ENCODE measurements at regions of chr6 and their contacts with region 1.

Region 1: DNA sequence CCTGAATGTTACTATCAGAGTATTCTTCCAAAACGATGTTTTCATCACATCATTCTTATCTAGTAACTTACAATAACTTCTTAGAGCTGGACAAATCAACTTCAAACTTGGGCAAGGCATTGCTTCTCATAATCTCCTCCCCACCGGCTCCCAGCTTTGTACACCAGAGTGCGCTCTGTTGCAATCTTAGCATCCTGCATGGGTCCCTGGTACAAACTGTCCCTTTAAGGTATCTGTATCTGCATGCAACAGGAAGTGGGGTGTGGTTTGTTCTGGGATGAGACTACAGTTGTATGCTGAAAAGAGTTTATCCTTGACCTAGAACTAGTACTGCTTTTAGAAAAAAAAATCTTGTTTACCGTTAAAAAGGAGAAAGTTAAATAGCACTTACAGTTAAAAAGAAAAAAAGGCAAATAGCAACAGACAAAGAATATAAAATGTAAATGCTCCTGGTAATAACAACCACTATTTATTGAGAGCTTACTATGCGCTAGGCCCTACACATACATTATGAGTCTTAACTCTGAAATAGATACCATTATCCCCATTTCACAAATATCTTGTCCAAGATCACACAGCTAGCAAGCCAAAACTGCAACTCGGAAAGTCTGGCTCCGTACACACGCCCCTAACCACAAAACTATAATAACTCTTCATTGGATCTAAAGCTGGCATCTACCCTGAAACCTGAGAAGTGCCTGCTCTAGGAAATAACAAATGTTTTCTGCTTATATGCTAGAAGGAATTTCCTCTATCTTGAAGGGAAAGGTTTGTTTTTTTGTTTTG is 9.8 kb upstream of the HECA start:
- DNase-seq: peak; percentile 94
- H3K4me3 Mint-ChIP-seq: peak overlapping the region; percentile 73
- H3K27ac Mint-ChIP-seq: peak overlapping the region; percentile 98
- H3K4me1 Mint-ChIP-seq: peaks cover 41% of the 10 kb centered on the region
- H3K27me3 Mint-ChIP-seq: no peaks in the 10 kb centered on the region

Region 2: DNA sequence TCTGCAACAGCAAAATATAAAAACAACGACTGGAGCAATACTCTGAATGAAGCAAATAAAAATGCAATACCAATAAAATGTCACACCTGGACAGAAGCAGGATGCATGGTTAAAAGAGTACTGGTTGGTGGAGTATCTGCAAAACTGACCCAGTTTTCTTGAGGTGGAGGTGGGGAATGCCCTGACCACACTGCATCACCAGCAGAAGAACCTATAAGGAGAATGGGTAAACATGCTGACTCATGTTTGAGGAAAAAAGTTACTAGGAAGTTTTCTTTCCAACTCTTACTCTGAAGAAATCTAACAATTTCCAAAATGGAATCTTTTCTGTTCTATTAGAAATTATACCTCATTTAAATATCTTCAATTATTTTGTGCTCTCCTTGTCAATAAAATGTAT is 180.7 kb before region 1 on chr6:
- intact Hi-C with region 1: no loop called
- DNase-seq: peak; percentile 69
- H3K4me3 Mint-ChIP-seq: no peak overlapping the region
- H3K27ac Mint-ChIP-seq: peak overlapping the region; percentile 45
- H3K4me1 Mint-ChIP-seq: peaks cover 40% of the 10 kb centered on the region
- H3K27me3 Mint-ChIP-seq: peaks cover 2% of the 10 kb centered on the region

Region 3: DNA sequence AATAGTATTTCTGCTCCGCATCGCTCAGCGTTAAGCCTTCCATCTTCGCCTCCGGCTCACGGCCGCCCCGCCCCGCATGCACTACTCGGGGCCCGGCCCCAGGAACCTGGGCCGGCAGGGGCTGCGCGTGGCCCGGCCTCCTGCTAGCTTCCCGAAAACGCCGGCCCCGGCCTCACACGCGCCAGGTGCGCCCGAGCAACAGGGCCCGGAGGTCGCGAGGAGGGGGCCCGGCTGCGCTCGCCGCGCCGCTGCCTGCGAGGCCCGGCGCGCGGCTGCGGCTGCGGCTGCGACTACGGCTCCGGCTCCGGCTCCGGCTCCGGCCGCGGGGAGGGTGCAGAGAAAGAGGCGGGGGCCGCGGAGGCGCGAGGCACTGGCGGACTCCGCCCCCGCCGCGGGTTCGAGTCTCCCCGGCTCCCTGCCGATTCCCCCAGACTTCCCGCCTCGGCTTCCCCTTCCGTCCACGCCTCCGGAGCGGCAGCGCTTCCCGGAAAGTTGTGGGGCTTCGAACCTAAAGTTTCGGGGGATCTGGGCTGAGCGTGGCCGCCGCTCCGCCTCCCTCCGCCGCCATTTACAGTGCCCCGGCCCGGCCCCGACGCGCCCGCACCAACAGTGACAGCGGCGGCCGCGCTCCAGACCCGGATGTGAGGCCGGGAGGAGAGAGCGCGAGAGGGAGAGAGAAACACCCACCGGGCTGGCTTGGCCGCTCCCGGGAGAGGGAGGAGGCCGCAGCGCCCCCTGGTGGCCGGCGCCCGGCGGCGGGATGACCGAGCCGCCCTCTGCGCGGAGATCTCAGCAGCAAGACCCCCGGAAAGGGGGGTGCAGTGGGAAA is 137.2 kb before region 1 on chr6 and contains the start of gene REPS1:
- intact Hi-C with region 1: loop called (anchors 5 kb)
- DNase-seq: peak; percentile 98
- H3K4me3 Mint-ChIP-seq: peak within 1 kb of the TSS; percentile 91
- H3K27ac Mint-ChIP-seq: peak within 1 kb of the TSS; percentile 97
- H3K4me1 Mint-ChIP-seq: peaks cover 19% of the 10 kb centered on the region
- H3K27me3 Mint-ChIP-seq: peaks cover under 1% of the 10 kb centered on the region
- total RNA-seq, gene REPS1: 65.8 and 70.1 TPM in 2 replicates

Region 4: DNA sequence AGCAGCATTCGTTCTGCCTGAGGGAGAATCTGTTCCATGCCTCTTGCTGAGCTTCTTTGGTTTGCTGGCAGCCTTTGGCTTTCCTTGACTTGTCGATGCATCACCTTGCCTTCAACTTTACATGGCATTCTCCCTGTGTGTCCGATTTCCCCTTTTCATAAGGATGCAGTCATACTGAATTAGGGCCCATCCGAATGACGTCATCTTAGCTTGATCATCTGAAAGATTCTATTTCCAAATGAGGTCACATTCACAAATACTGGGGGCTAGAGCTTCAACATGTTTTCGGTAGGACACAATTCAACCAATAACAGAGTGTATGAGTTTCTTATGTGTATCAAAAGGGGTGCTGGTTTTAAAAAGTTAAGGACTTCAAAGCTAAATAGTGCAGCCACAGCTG is 18.0 kb before region 1 on chr6:
- intact Hi-C with region 1: no loop called
- DNase-seq: no peak
- H3K4me3 Mint-ChIP-seq: no peak overlapping the region
- H3K27ac Mint-ChIP-seq: no peak overlapping the region
- H3K4me1 Mint-ChIP-seq: peaks cover 5% of the 10 kb centered on the region
- H3K27me3 Mint-ChIP-seq: no peaks in the 10 kb centered on the region

Region 5: DNA sequence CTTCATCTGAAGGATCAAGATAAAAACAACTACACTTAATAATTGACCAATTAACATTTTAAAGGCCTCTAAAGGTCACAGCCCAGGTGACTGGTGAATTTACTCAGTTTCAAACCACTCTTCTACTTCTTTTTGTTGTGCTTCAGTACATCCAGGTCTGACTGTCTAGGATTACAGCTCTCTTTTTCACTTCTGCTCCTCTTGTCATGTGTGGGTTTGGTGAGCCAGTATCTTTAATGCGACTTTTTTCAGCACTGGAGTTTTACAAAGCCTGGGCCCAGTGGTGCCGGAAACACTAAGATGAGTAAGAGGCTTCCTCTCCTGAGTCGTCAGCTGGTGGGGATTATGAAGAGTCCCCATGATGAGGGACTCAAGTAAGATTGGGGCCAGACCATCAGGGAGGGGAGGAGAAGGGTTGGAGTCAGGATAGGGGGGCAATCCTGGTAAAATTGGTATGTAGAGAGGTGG is 36.8 kb after region 1 on chr6:
- intact Hi-C with region 1: loop called (anchors 1 kb)
- DNase-seq: peak; percentile 91
- H3K4me3 Mint-ChIP-seq: peak overlapping the region; percentile 80
- H3K27ac Mint-ChIP-seq: peak overlapping the region; percentile 98
- H3K4me1 Mint-ChIP-seq: peaks cover 66% of the 10 kb centered on the region
- H3K27me3 Mint-ChIP-seq: no peaks in the 10 kb centered on the region

Region 6: DNA sequence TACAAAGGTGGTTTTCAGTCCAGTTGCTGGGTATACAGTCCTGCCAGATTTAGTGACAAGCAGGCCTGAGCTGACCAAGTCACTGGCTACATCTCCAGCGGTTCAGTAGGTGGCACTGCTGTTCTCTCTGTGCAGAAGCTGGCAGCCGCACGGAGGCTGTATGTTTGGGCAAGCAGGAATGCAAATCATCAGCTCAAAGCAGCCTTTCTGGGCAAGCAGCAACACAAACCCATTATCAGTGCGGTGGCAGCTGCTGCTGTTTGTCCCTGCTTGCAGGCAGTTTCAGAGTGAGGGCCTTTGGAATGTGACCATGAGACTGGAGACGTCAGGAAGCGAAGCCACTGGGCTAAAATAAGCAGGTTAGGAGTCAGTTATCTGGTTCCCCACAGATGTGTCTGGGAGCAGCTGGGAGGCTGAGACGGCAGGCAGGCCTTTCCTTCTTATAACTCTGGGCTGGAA is 94.2 kb after region 1 on chr6:
- intact Hi-C with region 1: loop called (anchors 1 kb)
- DNase-seq: peak; percentile 90
- H3K4me3 Mint-ChIP-seq: peak overlapping the region; percentile 52
- H3K27ac Mint-ChIP-seq: peak overlapping the region; percentile 82
- H3K4me1 Mint-ChIP-seq: peaks cover 10% of the 10 kb centered on the region
- H3K27me3 Mint-ChIP-seq: no peaks in the 10 kb centered on the region

Region 7: DNA sequence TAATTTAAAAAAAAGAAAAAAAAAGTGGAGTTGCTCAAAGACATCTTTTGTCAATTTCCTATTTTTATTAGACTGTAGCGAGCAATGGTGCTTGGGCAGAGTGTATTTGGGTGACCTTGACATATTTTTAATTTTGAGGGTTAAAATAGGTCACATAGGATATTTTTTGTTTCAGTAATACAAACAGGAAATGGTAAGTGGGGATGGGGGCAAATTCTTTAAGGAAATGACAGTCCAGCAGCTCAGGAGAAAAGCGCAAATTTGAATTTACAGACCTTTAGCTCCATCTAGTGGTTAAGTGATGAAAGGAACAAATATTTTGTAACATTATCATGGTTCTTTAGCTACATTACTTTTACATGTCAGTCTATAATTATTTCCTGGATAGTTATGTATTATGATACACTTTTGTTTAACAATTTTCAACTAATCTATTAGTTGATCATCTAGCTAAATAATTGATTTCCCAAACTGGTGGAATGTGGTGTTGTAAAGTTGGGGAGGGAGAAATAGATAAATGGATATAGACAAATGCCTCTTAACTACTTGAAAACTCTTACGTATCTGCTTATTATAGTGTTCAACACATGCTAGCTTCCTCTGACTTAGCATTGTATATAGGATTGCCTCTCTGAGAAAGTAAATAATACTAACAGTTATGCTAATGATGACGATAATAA is 239.4 kb after region 1 on chr6:
- intact Hi-C with region 1: loop called (anchors 1 kb)
- DNase-seq: peak; percentile 68
- H3K4me3 Mint-ChIP-seq: no peak overlapping the region
- H3K27ac Mint-ChIP-seq: no peak overlapping the region
- H3K4me1 Mint-ChIP-seq: peaks cover 30% of the 10 kb centered on the region
- H3K27me3 Mint-ChIP-seq: peaks cover 4% of the 10 kb centered on the region

Measured in activated CD4-positive, alpha-beta T cell treated with anti-CD3 and anti-CD28 coated beads, Interleukin-2, amount 10 ng/mL, durations not matched to agents 24 days and 14 days (primary cell).